ENCODE measurements at regions of chr5 and their contacts with region 1.

Region 1: GRCh38 chr5:128201065-128201926 is 117.7 kb downstream of the SLC12A2 start:
- DNase-seq: peak; percentile 71 to 92 (median 86)
- H3K4me3 ChIP-seq: peak overlapping the region in 1 of 4 donors; percentile 14
- H3K27ac ChIP-seq: no peak overlapping the region
- H3K4me1 ChIP-seq: peaks cover 0 to 4% of the 10 kb centered on the region in 2 donors
- H3K27me3 ChIP-seq: no peaks in the 10 kb centered on the region
- CTCF ChIP-seq: peak; percentile 66 to 92 (median 87)
- POLR2A ChIP-seq: no peak

Region 2: GRCh38 chr5:127564002-127564769 is 637.1 kb before region 1 on chr5:
- intact Hi-C with region 1: loop called (anchors 5 to 10 kb)
- DNase-seq: peak; percentile 17 to 63 (median 52)
- H3K4me3 ChIP-seq: no peak overlapping the region
- H3K27ac ChIP-seq: no peak overlapping the region
- H3K4me1 ChIP-seq: no peaks in the 10 kb centered on the region
- H3K27me3 ChIP-seq: no peaks in the 10 kb centered on the region
- CTCF ChIP-seq: peak; percentile 21 to 82 (median 74)
- POLR2A ChIP-seq: no peak

Region 3: GRCh38 chr5:127757576-127757975 is 443.7 kb before region 1 on chr5:
- intact Hi-C with region 1: loop called (anchors 5 to 10 kb)
- DNase-seq: peak; percentile 51 to 78 (median 55)
- H3K4me3 ChIP-seq: no peak overlapping the region
- H3K27ac ChIP-seq: no peak overlapping the region
- H3K4me1 ChIP-seq: peaks cover 11 to 14% of the 10 kb centered on the region in 2 donors
- H3K27me3 ChIP-seq: no peaks in the 10 kb centered on the region
- CTCF ChIP-seq: peak; percentile 30 to 75 (median 68)
- POLR2A ChIP-seq: no peak

Region 4: DNA sequence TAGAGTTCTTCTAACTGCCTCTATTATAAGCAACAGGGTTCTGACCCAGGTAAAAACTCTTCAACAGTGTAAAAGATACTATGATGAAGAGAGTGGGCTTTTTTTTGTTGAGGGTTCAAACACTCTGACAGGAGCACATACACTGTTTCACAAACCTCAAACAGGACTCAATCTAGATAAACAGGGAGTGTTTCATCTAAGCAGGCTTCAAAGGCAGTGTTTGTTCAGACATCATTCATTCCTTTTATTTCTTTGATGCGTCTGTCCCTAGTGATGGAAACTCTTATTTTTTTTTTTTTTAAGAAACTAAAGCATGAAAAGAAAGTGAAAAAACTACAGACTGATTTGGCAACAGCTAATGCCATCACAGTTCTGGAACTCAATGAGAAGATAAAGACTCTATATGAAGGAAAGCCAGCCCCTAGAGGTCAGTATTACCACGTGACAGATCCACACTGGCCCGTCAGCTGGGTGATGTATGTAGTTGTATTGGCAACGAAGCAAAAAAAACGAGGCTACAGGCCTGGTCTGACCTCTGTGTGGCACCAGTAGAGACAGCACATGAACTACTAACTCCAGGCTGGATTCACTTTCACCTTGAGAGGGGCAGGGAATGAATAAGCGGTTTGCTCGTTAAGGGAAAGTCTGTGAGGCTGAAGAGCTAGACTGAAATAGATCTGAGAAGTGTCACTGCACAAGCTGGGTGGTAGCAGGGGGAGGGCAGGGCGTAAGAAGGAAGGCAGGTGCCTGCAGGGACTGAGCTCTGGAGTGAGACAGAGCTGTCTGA is 325.9 kb before region 1 on chr5:
- intact Hi-C with region 1: loop called in 1 of 2 experiments (anchors 10 kb)
- DNase-seq: peak; percentile 75 to 93 (median 87)
- H3K4me3 ChIP-seq: no peak overlapping the region
- H3K27ac ChIP-seq: peak overlapping the region; percentile 2 to 78 (median 59)
- H3K4me1 ChIP-seq: peaks cover 28 to 45% of the 10 kb centered on the region in 2 donors
- H3K27me3 ChIP-seq: no peaks in the 10 kb centered on the region
- CTCF ChIP-seq: peak in 5 of 6 experiments; percentile 21 to 52 (median 30)
- POLR2A ChIP-seq: peak in 1 of 2 donors; percentile 70

Region 5: DNA sequence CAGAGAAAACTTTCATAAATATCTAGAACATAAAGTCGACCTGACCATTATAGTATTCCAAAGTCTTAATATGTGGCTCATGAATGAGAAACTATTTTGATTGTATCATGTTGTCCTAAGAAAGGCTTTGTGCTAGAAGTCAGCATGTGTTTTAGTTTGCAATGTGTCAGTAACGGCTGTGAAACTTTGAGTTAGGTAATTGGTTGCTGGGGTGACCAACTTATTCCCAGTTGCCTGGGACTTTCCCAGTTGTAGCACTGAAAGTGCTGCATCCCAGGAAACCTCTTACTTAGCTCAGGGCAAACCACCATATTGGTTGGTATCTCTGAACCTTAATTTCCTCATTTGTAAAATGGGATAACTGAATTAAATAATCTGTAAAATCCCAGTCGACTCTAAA is 232.3 kb before region 1 on chr5:
- intact Hi-C with region 1: no loop called
- DNase-seq: no peak
- H3K4me3 ChIP-seq: no peak overlapping the region
- H3K27ac ChIP-seq: no peak overlapping the region
- H3K4me1 ChIP-seq: no peaks in the 10 kb centered on the region
- H3K27me3 ChIP-seq: no peaks in the 10 kb centered on the region
- CTCF ChIP-seq: no peak
- POLR2A ChIP-seq: no peak

Region 6: GRCh38 chr5:128559306-128560297 is 358.3 kb after region 1 on chr5:
- intact Hi-C with region 1: no loop called
- DNase-seq: no peak
- H3K4me3 ChIP-seq: no peak overlapping the region
- H3K27ac ChIP-seq: no peak overlapping the region
- H3K4me1 ChIP-seq: no peaks in the 10 kb centered on the region
- H3K27me3 ChIP-seq: no peaks in the 10 kb centered on the region
- CTCF ChIP-seq: no peak
- POLR2A ChIP-seq: no peak

Measured in adrenal gland (tissue), 19 donors.